ENCODE measurements at regions of chr1 and their contacts with region 1.

Region 1: DNA sequence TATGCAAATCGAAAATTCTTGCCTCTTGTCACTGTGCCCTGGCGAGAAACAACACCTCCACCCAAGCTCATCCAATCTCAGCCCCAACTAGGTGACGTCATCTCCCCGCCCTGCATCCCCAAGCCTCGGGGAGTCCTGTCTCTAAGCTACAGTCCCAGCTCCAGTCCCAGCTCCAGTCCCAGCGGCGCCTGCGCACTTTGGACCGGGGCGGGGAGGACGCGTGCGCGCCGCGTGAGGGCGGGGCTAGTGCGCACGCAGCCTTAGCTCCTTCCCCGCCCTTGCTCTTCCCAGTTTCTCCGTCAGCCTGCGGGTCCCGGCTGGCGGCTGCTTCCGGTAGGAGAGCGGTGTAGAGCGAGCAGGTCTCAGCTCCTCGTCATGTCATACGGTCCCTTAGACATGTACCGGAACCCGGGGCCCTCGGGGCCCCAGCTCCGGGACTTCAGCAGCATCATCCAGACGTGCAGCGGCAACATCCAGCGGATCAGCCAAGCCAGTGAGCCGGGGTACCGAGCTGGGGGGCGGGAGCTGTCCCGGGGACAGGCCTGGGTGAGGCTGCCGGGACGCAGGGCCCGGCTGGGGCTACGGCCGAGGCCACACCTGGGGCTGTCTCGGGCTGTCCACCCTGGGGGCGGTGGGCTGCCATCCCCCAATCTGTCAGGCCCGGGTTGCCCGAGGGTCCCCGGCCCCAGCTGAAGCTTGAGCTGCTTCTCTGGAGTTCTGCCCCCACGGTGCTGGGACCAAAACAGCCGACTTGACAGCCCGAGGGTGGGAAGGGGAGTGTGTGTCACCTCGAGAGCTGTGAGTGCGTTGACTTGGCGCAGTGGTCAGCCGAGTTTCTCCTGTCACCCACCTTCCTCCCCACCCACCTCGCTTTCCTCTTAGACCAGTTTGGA is at the start of gene STX12:
- DNase-seq: peak; percentile 99
- H3K4me3 Mint-ChIP-seq: peak within 1 kb of the TSS; percentile 85
- H3K27ac Mint-ChIP-seq: peak within 1 kb of the TSS; percentile 89
- H3K4me1 Mint-ChIP-seq: peaks cover 14% of the 10 kb centered on the region
- H3K27me3 Mint-ChIP-seq: no peaks in the 10 kb centered on the region
- CTCF ChIP-seq: no peak
- total RNA-seq, gene STX12: 34.6 and 36.1 TPM in 2 replicates

Region 2: DNA sequence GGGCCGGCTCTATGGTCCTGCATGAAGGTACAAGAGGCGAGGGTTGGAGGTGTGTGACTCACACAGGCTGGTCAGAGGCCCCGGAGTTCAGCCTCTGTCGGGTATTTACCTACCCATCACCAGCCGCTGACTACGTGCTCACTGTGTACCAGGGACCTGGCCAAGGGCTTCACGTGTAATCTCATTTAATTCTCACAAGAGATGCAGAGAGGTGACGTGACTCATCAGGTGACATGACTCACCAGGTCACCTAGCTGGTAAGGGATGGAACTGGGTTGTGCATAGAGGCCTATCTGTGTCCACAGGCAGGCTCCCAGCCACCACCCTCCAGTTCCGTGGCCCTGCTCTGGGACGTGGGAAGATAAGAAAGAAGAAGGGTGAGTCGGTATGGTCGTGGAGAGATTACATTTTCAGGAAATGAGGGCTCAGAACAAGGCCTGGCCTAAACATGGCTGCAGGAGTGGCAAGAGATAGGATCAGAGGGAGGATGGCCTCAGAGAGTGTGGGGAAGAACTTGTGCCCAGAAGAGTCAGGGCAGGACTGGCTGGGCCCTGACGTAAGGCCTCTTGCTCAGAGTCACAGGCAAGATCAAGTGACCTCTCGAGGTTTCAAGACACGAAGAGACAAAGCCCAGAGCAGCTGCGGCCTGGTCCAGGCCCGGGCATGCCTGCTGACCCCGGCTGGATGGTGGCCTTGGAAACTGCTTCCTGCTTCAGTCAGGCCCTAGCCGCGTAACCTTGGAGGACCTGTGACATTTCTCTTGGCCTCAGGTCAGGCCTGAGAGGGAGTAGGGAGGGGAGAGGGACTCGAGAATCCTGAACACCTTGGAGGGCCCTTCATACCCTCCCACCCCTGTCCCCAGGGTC is 230.5 kb before region 1 on chr1:
- CTCF ChIA-PET with region 1: no interaction called
- POLR2A ChIA-PET with region 1: no interaction called
- intact Hi-C with region 1: no loop called
- DNase-seq: peak; percentile 86
- H3K4me3 Mint-ChIP-seq: peak overlapping the region; percentile 3
- H3K27ac Mint-ChIP-seq: peak overlapping the region; percentile 87
- H3K4me1 Mint-ChIP-seq: peaks cover 43% of the 10 kb centered on the region
- H3K27me3 Mint-ChIP-seq: no peaks in the 10 kb centered on the region
- CTCF ChIP-seq: no peak

Region 3: GRCh38 chr1:27671964-27672749 is 101.0 kb before region 1 on chr1 and contains the start of gene IFI6:
- CTCF ChIA-PET with region 1: interaction called, 3 read pairs
- POLR2A ChIA-PET with region 1: interaction called, 22 read pairs
- intact Hi-C with region 1: loop called (anchors 5 kb)
- DNase-seq: peak; percentile 95
- H3K4me3 Mint-ChIP-seq: peak within 1 kb of the TSS; percentile 77
- H3K27ac Mint-ChIP-seq: peak within 1 kb of the TSS; percentile 64
- H3K4me1 Mint-ChIP-seq: peaks cover 10% of the 10 kb centered on the region
- H3K27me3 Mint-ChIP-seq: no peaks in the 10 kb centered on the region
- CTCF ChIP-seq: no peak
- total RNA-seq, gene IFI6: 3.8 and 5.8 TPM in 2 replicates

Region 4: DNA sequence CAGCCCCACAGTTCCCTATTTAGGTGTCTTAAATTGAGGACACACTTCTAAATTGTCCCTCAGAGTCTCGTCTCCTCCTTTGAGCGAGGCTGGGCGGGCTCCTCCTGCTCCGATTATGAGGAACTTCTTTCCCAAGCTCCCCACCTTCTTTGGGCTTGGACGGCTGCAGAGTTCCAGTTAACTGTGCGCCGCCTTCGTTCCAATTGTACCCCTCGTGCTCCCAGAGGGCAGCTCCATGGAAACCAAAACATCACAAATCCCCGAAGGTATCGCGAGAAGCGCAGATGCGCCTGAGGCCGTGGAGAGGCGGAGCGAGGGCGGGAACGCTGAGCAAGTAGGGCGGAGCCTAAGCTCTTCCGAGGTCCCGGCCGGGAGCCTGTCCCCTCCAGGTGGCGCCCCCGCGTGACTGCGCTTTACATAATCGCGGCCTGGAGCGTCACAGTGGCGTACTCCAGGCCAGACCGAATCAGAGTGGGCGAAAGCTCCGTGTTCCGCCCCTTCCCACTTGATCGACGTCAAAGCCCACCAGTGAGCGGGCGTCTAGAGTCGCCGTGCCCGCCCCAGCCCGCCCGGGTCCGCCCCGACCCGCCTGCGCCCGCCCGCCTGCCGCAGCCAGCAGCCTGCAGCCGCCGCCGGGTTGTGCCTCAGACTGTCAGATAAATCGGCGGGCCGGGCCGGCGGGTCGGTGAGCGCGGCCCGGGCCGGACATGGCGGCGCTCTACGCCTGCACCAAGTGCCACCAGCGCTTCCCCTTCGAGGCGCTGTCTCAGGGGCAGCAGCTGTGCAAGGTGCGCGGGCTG is 47.6 kb before region 1 on chr1 and contains the start of gene FAM76A:
- CTCF ChIA-PET with region 1: interaction called, 5 read pairs
- POLR2A ChIA-PET with region 1: interaction called, 71 read pairs
- intact Hi-C with region 1: no loop called
- DNase-seq: peak; percentile 98
- H3K4me3 Mint-ChIP-seq: peak within 1 kb of the TSS; percentile 88
- H3K27ac Mint-ChIP-seq: peak within 1 kb of the TSS; percentile 100
- H3K4me1 Mint-ChIP-seq: peaks cover 11% of the 10 kb centered on the region
- H3K27me3 Mint-ChIP-seq: peaks cover 3% of the 10 kb centered on the region
- CTCF ChIP-seq: peak; percentile 23
- total RNA-seq, gene FAM76A: 9.7 and 9.9 TPM in 2 replicates

Region 5: DNA sequence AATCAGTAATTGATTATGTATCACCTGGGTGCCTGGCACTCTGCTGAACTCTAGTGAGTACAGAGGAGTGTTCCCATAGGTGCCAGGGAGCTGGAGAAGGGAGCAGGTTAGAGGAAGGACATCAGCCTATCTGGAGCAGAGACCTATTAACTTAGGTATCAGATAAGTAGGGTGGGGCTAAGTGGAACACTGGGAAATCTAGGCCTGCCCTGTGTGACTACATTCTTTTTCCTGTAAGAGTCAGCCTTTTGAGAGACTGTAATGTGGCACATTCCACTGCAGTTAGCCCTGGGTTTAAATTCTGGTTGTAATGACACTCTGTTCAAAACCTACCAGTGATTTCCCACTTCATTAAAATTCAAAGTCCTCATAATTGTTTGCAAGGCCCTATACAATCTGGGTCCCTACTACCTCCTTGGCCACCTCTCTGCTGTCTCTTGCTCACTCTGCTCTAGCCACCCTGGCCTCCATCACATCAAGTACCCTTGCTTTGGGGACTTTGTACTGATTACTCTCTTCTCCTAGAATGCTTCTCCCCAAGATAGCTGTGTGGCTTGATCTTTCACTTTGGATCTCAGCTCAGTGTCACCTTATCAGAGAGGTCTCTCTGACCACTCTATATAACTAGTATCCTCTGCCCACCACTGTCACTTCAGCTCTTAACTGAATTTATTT is 12.7 kb after region 1 on chr1:
- CTCF ChIA-PET with region 1: interaction called, 5 read pairs
- POLR2A ChIA-PET with region 1: interaction called, 48 read pairs
- intact Hi-C with region 1: no loop called
- DNase-seq: peak; percentile 5
- H3K4me3 Mint-ChIP-seq: no peak overlapping the region
- H3K27ac Mint-ChIP-seq: peak overlapping the region; percentile 33
- H3K4me1 Mint-ChIP-seq: peaks cover 9% of the 10 kb centered on the region
- H3K27me3 Mint-ChIP-seq: no peaks in the 10 kb centered on the region
- CTCF ChIP-seq: no peak

Region 6: GRCh38 chr1:27830621-27831424 is 57.6 kb after region 1 on chr1 and contains the start of gene PPP1R8:
- CTCF ChIA-PET with region 1: interaction called, 3 read pairs
- POLR2A ChIA-PET with region 1: interaction called, 72 read pairs
- intact Hi-C with region 1: loop called (anchors 5 kb)
- DNase-seq: peak; percentile 97
- H3K4me3 Mint-ChIP-seq: peak within 1 kb of the TSS; percentile 90
- H3K27ac Mint-ChIP-seq: peak within 1 kb of the TSS; percentile 95
- H3K4me1 Mint-ChIP-seq: peaks cover 15% of the 10 kb centered on the region
- H3K27me3 Mint-ChIP-seq: no peaks in the 10 kb centered on the region
- CTCF ChIP-seq: no peak
- total RNA-seq, gene PPP1R8: 48.6 and 51.1 TPM in 2 replicates

Region 7: DNA sequence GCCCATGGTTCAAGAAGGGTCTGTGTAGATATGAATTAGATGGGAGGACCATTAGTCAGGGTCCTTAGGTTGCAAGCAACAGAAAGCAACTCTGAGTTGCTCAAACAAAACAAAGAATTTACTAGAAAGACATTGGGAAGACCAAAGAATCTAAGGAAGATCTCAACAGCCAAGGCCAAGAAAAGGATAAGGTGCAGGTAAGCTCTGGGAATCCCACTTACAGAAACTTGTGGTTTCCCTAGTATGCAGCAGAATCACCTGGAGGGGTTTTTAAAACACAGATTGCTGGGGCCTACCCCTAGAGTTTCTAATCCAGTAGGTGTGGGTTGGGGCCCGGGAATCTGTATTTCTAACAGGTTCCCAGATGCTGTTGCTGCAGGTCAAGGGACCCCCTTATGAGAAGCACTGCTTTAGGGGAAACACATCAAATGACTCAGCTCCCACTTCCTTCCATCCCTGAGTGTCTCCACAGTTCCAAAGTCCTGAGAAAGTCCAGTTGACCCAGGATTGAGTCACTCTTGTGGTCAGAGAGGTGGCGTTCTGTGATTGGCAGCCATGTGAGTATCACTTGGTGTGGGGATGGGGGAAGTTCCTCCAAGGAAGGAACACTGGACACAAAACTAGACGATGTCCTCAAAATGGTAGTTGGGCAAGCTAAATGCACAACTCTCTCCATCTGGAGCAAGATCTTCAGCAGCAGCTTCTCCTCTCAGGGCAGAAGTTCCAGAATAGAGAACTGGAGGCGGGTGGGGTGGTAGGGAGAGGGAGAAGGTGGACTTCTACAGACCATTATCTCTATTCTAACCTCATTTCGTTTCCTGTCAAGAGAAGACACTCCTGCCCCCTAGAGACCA is 339.4 kb after region 1 on chr1:
- CTCF ChIA-PET with region 1: no interaction called
- POLR2A ChIA-PET with region 1: no interaction called
- intact Hi-C with region 1: no loop called
- DNase-seq: peak; percentile 64
- H3K4me3 Mint-ChIP-seq: no peak overlapping the region
- H3K27ac Mint-ChIP-seq: no peak overlapping the region
- H3K4me1 Mint-ChIP-seq: peaks cover 9% of the 10 kb centered on the region
- H3K27me3 Mint-ChIP-seq: no peaks in the 10 kb centered on the region
- CTCF ChIP-seq: peak; percentile 29

Measured in MCF 10A (cell line).